GM12878 (cell line): ENCODE measurements at regions of chr2 and their contacts with region 1.

Region 1: DNA sequence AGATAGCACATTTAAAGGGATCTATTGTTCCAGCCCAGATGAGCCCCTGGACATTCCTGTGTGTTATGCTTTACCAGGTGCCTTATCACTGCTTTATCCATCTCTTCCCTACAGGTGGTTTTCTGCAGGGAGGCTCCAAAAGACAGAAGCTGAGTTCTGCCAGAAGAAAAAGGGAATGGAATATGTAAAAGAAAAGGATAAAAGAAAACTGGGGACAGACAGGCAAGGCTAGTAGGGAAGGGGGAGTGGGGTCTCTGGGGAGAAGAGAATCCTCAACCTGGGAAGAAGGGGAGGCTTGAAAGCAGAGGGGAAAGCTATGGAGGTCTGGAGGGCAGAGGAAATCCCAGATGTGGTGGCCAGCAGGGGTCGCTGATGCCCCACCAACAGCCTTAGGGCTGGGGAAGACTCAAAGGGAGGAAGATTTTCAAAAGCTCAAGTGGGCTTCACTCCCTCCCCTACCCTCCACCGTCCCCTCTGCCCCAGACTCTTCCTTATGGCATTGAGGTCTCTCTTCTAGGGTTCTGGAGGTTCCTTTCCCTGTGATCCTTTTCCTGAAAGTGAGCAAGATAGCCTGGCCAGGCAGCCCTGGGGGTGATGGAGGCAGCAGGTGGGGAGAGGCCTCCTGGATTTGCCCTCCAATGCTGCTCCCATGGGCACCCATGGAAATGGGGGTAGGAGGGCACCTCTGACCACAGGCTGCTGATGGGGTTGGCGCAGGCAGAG is 178.1 kb upstream of the PKDCC start:
- DNase-seq: peak; percentile 25
- ATAC-seq: peak; percentile 94
- H3K4me3 ChIP-seq: no peak overlapping the region
- H3K27ac ChIP-seq: no peak overlapping the region
- H3K4me1 ChIP-seq: no peaks in the 10 kb centered on the region
- H3K27me3 ChIP-seq: no peaks in the 10 kb centered on the region; a peak in 2 of 4 replicates
- CTCF ChIP-seq: peak; percentile 78 to 90 (median 84)
- EP300 ChIP-seq: no peak
- POLR2A ChIP-seq: no peak
- RAD21 ChIP-seq: peak; percentile 98

Region 2: DNA sequence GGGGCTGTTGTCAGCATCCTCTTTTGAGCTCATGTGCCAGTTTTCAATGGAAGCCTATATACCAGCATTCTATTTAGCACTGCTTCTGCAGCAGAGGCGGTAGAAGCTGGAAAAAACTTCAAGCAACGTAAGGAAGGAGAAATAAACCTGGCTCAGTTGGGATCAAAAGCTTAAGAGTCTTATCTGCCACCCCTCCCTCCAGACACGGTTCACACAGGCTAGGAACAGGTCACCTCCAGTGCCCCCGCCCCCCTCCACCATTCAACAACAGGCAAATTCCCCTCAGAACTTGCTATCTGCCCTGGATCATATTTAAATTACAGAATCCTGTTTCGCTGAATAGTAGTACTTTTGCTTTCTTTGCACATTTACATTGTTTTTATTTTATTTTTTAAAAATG is 206.6 kb before region 1 on chr2:
- CTCF ChIA-PET with region 1: no interaction called
- POLR2A ChIA-PET with region 1: no interaction called
- RAD21 ChIA-PET with region 1: no interaction called
- SMC1A ChIA-PET with region 1: no interaction called
- in situ Hi-C with region 1: no loop called
- intact Hi-C with region 1: no loop called
- DNase-seq: no peak
- ATAC-seq: no peak
- H3K4me3 ChIP-seq: no peak overlapping the region
- H3K27ac ChIP-seq: no peak overlapping the region
- H3K4me1 ChIP-seq: no peaks in the 10 kb centered on the region
- H3K27me3 ChIP-seq: no peaks in the 10 kb centered on the region; a peak in 1 of 4 replicates
- CTCF ChIP-seq: no peak
- EP300 ChIP-seq: no peak
- POLR2A ChIP-seq: no peak
- RAD21 ChIP-seq: no peak

Region 3: DNA sequence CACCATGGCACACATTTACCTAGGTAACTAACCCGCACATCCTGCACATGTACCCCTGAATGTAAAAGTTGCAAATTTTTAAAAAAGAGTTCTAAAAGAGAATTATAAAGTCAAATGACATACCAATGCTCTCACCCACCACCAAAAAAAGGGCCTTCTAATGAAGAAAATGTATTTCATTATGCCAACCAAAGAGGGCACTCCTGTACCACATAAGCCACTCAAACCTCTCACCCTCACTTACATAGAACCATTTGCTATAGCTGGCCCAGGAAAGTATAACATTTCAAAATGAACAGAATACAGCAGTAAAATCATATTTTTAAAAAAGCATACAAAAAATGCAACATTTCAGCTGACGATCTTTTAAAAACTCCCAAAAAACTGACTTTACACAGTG is 63.4 kb before region 1 on chr2:
- CTCF ChIA-PET with region 1: no interaction called
- POLR2A ChIA-PET with region 1: no interaction called
- RAD21 ChIA-PET with region 1: no interaction called
- SMC1A ChIA-PET with region 1: no interaction called
- in situ Hi-C with region 1: no loop called
- intact Hi-C with region 1: no loop called
- DNase-seq: no peak
- ATAC-seq: no peak
- H3K4me3 ChIP-seq: no peak overlapping the region
- H3K27ac ChIP-seq: no peak overlapping the region
- H3K4me1 ChIP-seq: no peaks in the 10 kb centered on the region
- H3K27me3 ChIP-seq: no peaks in the 10 kb centered on the region
- CTCF ChIP-seq: no peak
- EP300 ChIP-seq: no peak
- POLR2A ChIP-seq: no peak
- RAD21 ChIP-seq: no peak

Region 4: GRCh38 chr2:41840702-41841551 is 28.8 kb before region 1 on chr2:
- CTCF ChIA-PET with region 1: interaction called, 18 read pairs
- POLR2A ChIA-PET with region 1: no interaction called
- RAD21 ChIA-PET with region 1: interaction called, 9 read pairs
- SMC1A ChIA-PET with region 1: interaction called, 4 read pairs
- in situ Hi-C with region 1: no loop called
- intact Hi-C with region 1: no loop called
- DNase-seq: peak; percentile 88
- ATAC-seq: peak; percentile 100
- H3K4me3 ChIP-seq: peak overlapping the region; percentile 75
- H3K27ac ChIP-seq: peak overlapping the region; percentile 53; the same call in 1 of the 2 replicates
- H3K4me1 ChIP-seq: no peaks in the 10 kb centered on the region
- H3K27me3 ChIP-seq: peaks cover 1 to 2% of the 10 kb centered on the region in 2 experiments; a peak in 2 of 4 replicates
- CTCF ChIP-seq: peak; percentile 97 to 99 (median 99)
- EP300 ChIP-seq: no peak
- POLR2A ChIP-seq: peak; percentile 73
- RAD21 ChIP-seq: peak; percentile 83

Region 5: DNA sequence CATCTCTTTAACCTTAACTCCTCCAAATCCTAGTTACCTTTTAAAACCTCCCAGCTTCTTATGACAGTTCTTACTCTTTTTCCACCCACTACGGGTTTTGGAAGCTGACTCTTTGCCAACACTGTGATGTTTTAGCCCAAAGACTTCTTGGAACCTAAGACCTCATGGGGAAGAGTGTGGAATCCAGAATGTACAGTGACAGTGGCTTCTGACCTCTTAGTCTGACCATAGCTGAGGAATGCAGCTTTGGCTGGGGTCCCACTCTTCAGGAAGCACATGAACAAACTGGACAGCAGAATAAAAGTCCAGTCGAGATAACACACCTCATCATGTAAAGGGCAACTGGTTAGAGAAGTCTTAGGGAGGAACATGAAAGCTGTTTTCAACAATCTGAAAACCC is 17.1 kb after region 1 on chr2:
- CTCF ChIA-PET with region 1: interaction called, 10 read pairs
- POLR2A ChIA-PET with region 1: no interaction called
- RAD21 ChIA-PET with region 1: interaction called, 3 read pairs
- SMC1A ChIA-PET with region 1: no interaction called
- in situ Hi-C with region 1: no loop called
- intact Hi-C with region 1: no loop called
- DNase-seq: no peak
- ATAC-seq: no peak
- H3K4me3 ChIP-seq: no peak overlapping the region
- H3K27ac ChIP-seq: no peak overlapping the region
- H3K4me1 ChIP-seq: no peaks in the 10 kb centered on the region
- H3K27me3 ChIP-seq: peaks cover 0 to 1% of the 10 kb centered on the region in 2 experiments; a peak in 2 of 4 replicates
- CTCF ChIP-seq: no peak
- EP300 ChIP-seq: no peak
- POLR2A ChIP-seq: no peak
- RAD21 ChIP-seq: no peak

Region 6: GRCh38 chr2:42086500-42086953 is 216.8 kb after region 1 on chr2:
- CTCF ChIA-PET with region 1: interaction called, 462 read pairs
- POLR2A ChIA-PET with region 1: no interaction called
- RAD21 ChIA-PET with region 1: interaction called, 153 read pairs
- SMC1A ChIA-PET with region 1: interaction called, 198 read pairs
- in situ Hi-C with region 1: loop called (anchors 5 kb)
- intact Hi-C with region 1: loop called (anchors 1 kb)
- DNase-seq: no peak
- ATAC-seq: peak; percentile 73
- H3K4me3 ChIP-seq: no peak overlapping the region
- H3K27ac ChIP-seq: no peak overlapping the region
- H3K4me1 ChIP-seq: no peaks in the 10 kb centered on the region
- H3K27me3 ChIP-seq: 0 out of 4 replicates have a peak, but pooled peaks cover 0 to 3% of the 10 kb centered on the region in 2 experiments
- CTCF ChIP-seq: peak; percentile 61 to 83 (median 73); a peak in 4 of 6 replicates
- EP300 ChIP-seq: no peak
- POLR2A ChIP-seq: no peak
- RAD21 ChIP-seq: peak; percentile 96

Region 7: GRCh38 chr2:42102024-42102590 is 232.4 kb after region 1 on chr2:
- CTCF ChIA-PET with region 1: no interaction called
- POLR2A ChIA-PET with region 1: no interaction called
- RAD21 ChIA-PET with region 1: no interaction called
- SMC1A ChIA-PET with region 1: no interaction called
- in situ Hi-C with region 1: no loop called
- intact Hi-C with region 1: no loop called
- DNase-seq: peak; percentile 82
- ATAC-seq: peak; percentile 74
- H3K4me3 ChIP-seq: peak overlapping the region; percentile 47; the same call in 1 of the 2 replicates
- H3K27ac ChIP-seq: peak overlapping the region; percentile 94
- H3K4me1 ChIP-seq: peaks cover 81% of the 10 kb centered on the region
- H3K27me3 ChIP-seq: no peaks in the 10 kb centered on the region
- CTCF ChIP-seq: no peak
- EP300 ChIP-seq: peak; percentile 87 to 91
- POLR2A ChIP-seq: peak; percentile 71
- RAD21 ChIP-seq: no peak

Region 8: GRCh38 chr2:42328148-42328833 is 458.6 kb after region 1 on chr2:
- CTCF ChIA-PET with region 1: interaction called, 16 read pairs
- POLR2A ChIA-PET with region 1: no interaction called
- RAD21 ChIA-PET with region 1: interaction called, 4 read pairs
- SMC1A ChIA-PET with region 1: interaction called, 5 read pairs
- in situ Hi-C with region 1: loop called (anchors 10 kb)
- intact Hi-C with region 1: no loop called
- DNase-seq: no peak
- ATAC-seq: peak; percentile 73
- H3K4me3 ChIP-seq: no peak overlapping the region
- H3K27ac ChIP-seq: no peak overlapping the region
- H3K4me1 ChIP-seq: no peaks in the 10 kb centered on the region
- H3K27me3 ChIP-seq: no peaks in the 10 kb centered on the region
- CTCF ChIP-seq: peak; percentile 26 to 47 (median 29); a peak in 3 of 6 replicates
- EP300 ChIP-seq: no peak
- POLR2A ChIP-seq: no peak
- RAD21 ChIP-seq: peak; percentile 58

Region 9: GRCh38 chr2:43100883-43101662 is 1231.4 kb after region 1 on chr2:
- CTCF ChIA-PET with region 1: no interaction called
- POLR2A ChIA-PET with region 1: no interaction called
- RAD21 ChIA-PET with region 1: no interaction called
- SMC1A ChIA-PET with region 1: no interaction called
- in situ Hi-C with region 1: no loop called
- intact Hi-C with region 1: no loop called
- DNase-seq: no peak
- ATAC-seq: no peak
- H3K4me3 ChIP-seq: no peak overlapping the region
- H3K27ac ChIP-seq: no peak overlapping the region
- H3K4me1 ChIP-seq: peaks cover 8% of the 10 kb centered on the region
- H3K27me3 ChIP-seq: no peaks in the 10 kb centered on the region
- CTCF ChIP-seq: no peak
- EP300 ChIP-seq: no peak
- POLR2A ChIP-seq: no peak
- RAD21 ChIP-seq: no peak